Heart right ventricle (tissue), 16 donors: ENCODE measurements at regions of chr2 and their contacts with region 1.

Region 1: GRCh38 chr2:109331896-109332848 is 203.2 kb downstream of the SH3RF3 start:
- DNase-seq: peak; percentile 63 to 65
- ATAC-seq: peak; percentile 82 to 95 (median 92)
- H3K4me3 ChIP-seq: peak overlapping the region in 7 of 10 donors; percentile 8 to 40 (median 26)
- H3K27ac ChIP-seq: peak overlapping the region in 8 of 10 donors; percentile 20 to 77 (median 62)
- H3K4me1 ChIP-seq: peaks cover 6 to 59% (median 29%) of the 10 kb centered on the region in 9 donors
- H3K27me3 ChIP-seq: peaks cover 0 to 6% (median 0%) of the 10 kb centered on the region in 7 donors
- CTCF ChIP-seq: no peak

Region 2: DNA sequence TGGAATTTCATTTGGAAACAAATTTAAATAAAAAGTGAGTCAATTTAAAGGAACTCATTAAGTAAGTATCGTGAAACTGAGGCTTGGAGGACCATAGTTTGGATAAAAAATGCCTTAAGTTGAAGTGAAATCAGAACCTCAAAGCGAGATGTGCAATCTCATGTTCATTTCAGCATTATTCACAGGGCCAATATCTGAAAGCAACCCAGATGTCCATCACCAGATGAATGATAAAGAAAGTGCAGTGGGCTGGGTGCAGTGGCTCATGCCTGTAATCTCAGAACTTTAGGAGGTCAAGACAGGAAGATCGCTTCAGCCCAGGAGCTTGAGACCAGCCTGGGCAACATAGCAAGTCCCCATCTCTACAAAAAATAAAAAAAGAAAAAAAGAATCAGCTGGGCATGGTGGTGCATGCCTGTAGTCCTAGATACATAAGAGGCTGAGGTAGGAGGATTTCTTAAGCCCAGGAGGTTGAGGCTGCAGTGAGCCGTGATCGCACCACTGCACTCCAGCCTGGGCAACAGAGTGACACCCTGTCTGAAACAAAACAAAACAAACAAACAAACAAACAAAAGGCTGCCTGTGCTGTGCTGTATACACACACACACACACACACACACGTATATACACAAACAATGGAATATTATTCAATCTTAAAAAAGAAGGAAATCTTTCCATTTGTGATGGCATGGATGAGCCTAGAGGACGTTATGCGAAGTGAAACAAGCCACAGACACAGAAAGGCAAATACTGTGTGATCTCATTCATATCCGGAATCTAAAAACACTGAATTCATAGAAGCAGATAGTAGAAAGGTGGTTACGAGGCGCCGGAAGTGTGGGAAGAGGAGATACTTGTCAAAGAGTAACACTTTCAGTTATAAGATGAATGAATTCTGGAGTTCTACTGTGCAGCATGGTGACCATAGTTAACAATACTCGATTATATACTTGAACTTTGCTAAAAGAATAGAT is 188.7 kb before region 1 on chr2:
- intact Hi-C with region 1: no loop called
- DNase-seq: no peak
- ATAC-seq: no peak
- H3K4me3 ChIP-seq: no peak overlapping the region
- H3K27ac ChIP-seq: no peak overlapping the region
- H3K4me1 ChIP-seq: peaks cover 0 to 10% (median 0%) of the 10 kb centered on the region in 9 donors
- H3K27me3 ChIP-seq: no peaks in the 10 kb centered on the region
- CTCF ChIP-seq: no peak

Region 3: DNA sequence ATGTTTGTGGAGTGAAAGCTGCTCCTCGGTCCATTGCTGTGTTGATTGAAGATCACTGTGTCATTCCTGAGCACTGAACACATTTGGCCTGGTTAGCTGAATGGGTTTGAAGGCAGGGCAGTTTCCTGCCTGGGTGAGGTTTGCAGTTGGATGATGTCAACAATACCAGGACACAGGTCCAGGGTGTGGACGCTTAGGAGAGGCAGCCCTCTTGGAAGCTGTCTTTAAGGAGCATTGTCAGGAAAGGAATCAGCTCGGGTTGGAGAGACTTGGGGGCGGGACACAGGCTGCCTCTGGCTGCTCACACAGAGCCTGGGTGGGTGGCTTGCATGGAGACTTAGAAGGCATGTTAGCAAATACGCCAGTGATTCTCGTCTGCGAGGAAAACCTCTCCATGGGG is 43.9 kb after region 1 on chr2:
- intact Hi-C with region 1: loop called in 3 of 10 experiments (anchors 5 kb)
- DNase-seq: no peak
- ATAC-seq: peak in 7 of 8 donors; percentile 21 to 81 (median 48)
- H3K4me3 ChIP-seq: no peak overlapping the region
- H3K27ac ChIP-seq: no peak overlapping the region
- H3K4me1 ChIP-seq: peaks cover 0 to 28% (median 0%) of the 10 kb centered on the region in 9 donors
- H3K27me3 ChIP-seq: no peaks in the 10 kb centered on the region
- CTCF ChIP-seq: no peak

Region 4: DNA sequence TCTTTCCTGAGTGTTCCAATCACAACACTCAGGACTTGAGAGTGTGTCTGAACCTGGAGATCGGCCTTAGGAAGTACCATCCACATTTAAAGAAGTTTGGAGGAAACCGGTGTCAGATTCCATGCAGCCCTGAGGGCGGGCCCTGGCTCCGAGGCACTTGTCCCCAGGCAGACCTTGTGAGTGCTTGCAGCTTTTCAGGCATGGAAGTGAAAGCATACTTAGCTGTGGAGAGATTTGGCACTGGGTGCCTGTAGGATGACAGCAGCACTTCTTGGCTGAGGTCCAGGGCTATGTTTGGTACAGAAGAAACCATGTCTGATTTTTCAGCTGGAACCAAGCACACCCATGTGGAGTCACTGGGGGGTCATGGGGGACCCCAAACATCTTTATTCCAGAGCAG is 50.8 kb after region 1 on chr2:
- intact Hi-C with region 1: loop called in 3 of 10 experiments (anchors 5 kb)
- DNase-seq: peak; percentile 48 to 87
- ATAC-seq: peak; percentile 86 to 96 (median 93)
- H3K4me3 ChIP-seq: no peak overlapping the region
- H3K27ac ChIP-seq: peak overlapping the region in 7 of 10 donors; percentile 4 to 56 (median 41)
- H3K4me1 ChIP-seq: peaks cover 17 to 48% (median 30%) of the 10 kb centered on the region in 9 donors
- H3K27me3 ChIP-seq: no peaks in the 10 kb centered on the region
- CTCF ChIP-seq: no peak